ENCODE measurements at regions of chr17 and their contacts with region 1.

Region 1: GRCh38 chr17:57875309-57876115 is 25.7 kb upstream of the MRPS23 start:
- DNase-seq: no peak
- H3K4me3 ChIP-seq: peak overlapping the region in 3 of 4 donors; percentile 28 to 44 (median 29)
- H3K27ac ChIP-seq: peak overlapping the region; percentile 88 to 95 (median 93)
- H3K4me1 ChIP-seq: peaks cover 81 to 100% (median 94%) of the 10 kb centered on the region in 4 donors
- H3K27me3 ChIP-seq: no peaks in the 10 kb centered on the region
- CTCF ChIP-seq: peak; percentile 34 to 75 (median 37)
- EP300 ChIP-seq: peak; percentile 48
- POLR2A ChIP-seq: no peak

Region 2: DNA sequence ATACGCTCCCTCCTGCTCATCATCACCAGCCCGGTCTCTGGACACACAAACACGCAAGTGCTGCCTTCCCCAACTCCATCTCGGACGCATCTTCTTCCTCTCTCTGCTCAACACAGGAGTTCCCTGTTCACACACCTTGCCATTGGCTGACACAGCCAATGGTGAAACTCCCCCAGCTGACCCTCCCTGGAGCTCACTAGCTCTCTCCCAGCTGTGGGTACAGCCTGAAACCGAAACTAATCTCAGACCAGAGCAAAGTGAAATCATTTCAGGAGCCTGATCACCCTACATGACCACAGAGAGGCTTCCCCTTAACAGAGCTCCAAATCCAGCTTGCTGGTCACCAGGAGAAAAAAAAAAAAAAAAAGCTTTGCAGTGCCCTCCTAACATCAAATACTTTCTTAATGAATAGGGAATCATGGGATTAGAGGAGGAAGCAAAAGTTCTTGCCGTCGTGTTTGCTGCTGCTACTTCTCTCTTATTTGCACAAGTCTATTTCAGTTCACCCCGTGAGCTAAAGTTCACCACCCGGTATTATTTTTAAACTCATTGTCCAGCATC is 71.4 kb after region 1 on chr17:
- intact Hi-C with region 1: loop called (anchors 5 kb)
- DNase-seq: no peak
- H3K4me3 ChIP-seq: peak overlapping the region; percentile 46 to 62 (median 50)
- H3K27ac ChIP-seq: peak overlapping the region; percentile 98 to 100 (median 100)
- H3K4me1 ChIP-seq: peaks cover 90 to 100% (median 100%) of the 10 kb centered on the region in 4 donors
- H3K27me3 ChIP-seq: no peaks in the 10 kb centered on the region
- CTCF ChIP-seq: no peak
- EP300 ChIP-seq: no peak
- POLR2A ChIP-seq: no peak

Region 3: DNA sequence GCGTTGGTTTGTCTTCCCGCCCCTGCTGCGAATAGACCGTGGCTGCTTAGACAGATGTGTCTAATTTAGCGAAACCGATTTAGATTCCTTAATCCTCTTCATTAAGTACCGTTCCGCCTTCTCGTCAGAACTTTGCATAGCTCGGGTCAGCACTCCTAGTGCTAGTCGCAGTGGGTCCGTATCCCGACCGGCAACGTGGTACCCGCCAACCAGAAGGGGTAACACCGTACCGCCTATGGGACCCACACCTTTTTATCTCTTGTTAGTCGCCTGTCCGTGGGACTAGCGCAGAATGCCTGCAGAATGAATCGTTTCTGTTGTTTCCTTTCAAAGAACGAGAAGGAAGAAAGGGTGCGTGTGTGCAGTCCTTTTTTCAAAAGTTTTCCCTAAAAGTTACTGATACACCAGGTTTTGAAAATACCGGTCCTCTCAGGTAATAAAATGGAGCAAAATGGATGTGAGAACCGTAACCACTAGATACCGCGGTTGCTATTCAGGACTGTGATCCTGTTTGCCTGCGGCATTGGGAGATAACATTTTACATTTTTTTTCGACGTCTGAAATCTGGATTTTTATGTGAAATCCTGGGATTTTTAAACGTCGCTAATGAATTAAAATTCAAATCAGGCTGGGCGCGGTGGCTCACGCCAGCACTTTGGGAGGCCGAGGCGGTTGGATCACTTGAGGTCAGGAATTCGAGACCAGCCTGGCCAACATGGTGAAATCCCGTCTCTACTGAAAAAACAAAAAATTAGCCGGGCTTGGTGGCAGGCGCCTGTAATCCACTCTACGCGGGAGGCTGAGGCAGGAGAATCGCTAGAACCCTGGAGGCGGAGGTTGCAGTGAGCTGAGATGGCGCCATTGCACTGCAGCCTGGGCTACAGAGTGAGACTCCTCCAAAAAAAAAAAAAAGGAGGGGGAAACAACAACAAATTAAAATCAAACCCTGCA is 132.5 kb after region 1 on chr17:
- intact Hi-C with region 1: no loop called
- DNase-seq: no peak
- H3K4me3 ChIP-seq: peak overlapping the region; percentile 80 to 92 (median 88)
- H3K27ac ChIP-seq: peak overlapping the region; percentile 94 to 99 (median 96)
- H3K4me1 ChIP-seq: peaks cover 36 to 42% (median 39%) of the 10 kb centered on the region in 4 donors
- H3K27me3 ChIP-seq: no peaks in the 10 kb centered on the region
- CTCF ChIP-seq: no peak
- EP300 ChIP-seq: no peak
- POLR2A ChIP-seq: no peak